ENCODE measurements at regions of chr20 and their contacts with region 1.

Region 1: DNA sequence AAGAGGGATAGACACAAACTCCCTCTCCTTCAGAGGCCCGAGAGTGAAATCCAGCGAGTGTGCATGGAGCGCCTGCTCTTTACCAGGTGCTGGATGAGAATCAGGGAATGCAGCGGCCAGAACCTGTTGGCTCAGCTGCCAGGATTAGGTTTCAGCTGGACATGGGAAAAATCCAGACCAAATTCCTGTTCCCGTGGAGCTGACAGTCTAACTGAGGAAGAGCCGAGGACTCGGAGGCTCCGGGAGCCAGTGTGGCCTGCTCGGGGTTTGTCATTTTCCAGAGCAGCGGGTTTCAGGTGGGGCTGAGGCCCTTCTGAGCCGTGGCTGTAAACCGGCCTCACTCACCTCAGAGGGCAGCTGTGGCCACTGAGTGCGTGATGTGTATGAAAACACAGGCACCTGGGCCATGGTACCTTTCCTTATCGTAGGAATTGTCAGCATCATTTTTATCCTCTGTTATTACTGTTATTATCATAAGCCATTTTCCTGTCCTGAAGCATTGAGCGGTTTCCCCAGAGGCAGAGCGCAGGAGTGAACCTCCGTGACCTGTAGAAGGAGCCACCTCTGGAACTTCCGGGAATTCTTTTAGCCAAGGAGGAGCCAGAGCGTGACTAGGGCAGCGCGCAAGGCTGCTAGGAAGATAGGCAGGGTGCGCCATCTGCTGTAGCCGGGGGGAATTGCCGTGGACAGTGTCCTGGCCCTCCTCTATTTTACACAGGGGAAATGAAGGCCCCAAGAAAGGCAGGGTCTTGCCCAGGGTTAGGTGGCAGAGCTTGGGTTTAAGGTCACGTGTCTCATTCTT is 27.3 kb downstream of the PKIG start:
- DNase-seq: peak; percentile 92
- H3K4me3 Mint-ChIP-seq: peak overlapping the region; percentile 58
- H3K27ac Mint-ChIP-seq: peak overlapping the region; percentile 76
- H3K4me1 Mint-ChIP-seq: peaks cover 10% of the 10 kb centered on the region
- H3K27me3 Mint-ChIP-seq: no peaks in the 10 kb centered on the region
- CTCF ChIP-seq: peak; percentile 96

Region 2: DNA sequence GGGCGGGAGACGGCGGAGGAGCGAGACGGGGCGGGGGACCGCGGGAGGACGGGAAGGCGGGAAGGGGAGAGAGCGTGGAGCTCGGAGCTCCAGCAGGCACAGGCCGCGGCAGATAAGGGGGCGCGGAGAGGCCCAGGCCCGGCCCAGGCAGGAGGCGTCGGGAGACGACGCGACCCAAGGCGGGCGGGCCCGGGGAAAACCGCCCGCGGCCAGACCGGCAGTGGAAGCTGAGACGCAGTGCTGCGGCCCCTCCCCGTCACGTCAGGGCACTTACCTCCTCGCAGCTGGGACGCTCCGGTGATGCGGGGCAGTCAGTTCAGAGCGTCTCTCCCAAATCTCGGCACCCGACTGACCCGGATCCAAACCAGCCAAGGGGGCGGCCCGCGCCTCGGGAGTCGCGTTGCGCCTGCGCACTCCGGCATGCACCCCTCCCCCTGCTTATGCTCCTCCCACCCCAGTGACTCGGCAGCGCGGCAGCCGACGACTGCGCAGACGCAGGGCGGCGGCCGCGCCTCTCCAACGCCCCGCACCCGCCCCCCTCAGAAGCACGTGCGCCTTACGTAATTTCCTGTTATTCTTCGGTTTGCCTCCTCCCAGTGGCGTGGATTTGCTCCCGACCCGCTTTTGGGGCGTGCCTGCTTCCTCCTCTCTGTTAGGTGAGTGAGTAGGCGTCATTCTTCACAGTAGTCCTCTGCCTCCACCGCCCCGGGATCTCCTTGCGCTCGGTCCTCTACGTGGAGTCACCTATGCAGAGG is 399.1 kb before region 1 on chr20 and contains the start of gene OSER1:
- CTCF ChIA-PET with region 1: interaction called, 12 read pairs
- POLR2A ChIA-PET with region 1: interaction called, 4 read pairs
- intact Hi-C with region 1: loop called (anchors 10 kb)
- DNase-seq: peak; percentile 99
- H3K4me3 Mint-ChIP-seq: peak within 1 kb of the TSS; percentile 100
- H3K27ac Mint-ChIP-seq: peak within 1 kb of the TSS; percentile 100
- H3K4me1 Mint-ChIP-seq: peaks cover 39% of the 10 kb centered on the region
- H3K27me3 Mint-ChIP-seq: no peaks in the 10 kb centered on the region
- CTCF ChIP-seq: no peak
- total RNA-seq, gene OSER1: 45.4 and 50.8 TPM in 2 replicates

Region 3: DNA sequence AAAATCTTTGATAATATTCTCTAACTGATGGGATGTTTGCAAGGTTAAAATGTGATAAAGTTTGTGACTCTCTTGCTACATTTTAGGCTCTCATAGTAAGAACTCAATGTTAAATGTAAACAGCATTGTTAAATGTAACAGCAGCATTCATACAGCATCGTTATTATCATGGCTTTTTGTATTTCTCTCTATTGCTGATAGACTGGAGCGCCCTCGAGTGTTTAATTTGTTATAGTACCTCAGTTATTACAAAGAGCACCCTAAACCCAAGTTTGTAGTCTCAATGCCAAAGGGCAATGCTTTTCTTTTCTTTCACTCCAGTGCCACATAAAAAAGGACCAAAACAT is 148.9 kb before region 1 on chr20:
- CTCF ChIA-PET with region 1: interaction called, 16 read pairs
- POLR2A ChIA-PET with region 1: interaction called, 3 read pairs
- intact Hi-C with region 1: no loop called
- DNase-seq: peak; percentile 64
- H3K4me3 Mint-ChIP-seq: no peak overlapping the region
- H3K27ac Mint-ChIP-seq: no peak overlapping the region
- H3K4me1 Mint-ChIP-seq: peaks cover 13% of the 10 kb centered on the region
- H3K27me3 Mint-ChIP-seq: no peaks in the 10 kb centered on the region
- CTCF ChIP-seq: peak; percentile 66

Region 4: DNA sequence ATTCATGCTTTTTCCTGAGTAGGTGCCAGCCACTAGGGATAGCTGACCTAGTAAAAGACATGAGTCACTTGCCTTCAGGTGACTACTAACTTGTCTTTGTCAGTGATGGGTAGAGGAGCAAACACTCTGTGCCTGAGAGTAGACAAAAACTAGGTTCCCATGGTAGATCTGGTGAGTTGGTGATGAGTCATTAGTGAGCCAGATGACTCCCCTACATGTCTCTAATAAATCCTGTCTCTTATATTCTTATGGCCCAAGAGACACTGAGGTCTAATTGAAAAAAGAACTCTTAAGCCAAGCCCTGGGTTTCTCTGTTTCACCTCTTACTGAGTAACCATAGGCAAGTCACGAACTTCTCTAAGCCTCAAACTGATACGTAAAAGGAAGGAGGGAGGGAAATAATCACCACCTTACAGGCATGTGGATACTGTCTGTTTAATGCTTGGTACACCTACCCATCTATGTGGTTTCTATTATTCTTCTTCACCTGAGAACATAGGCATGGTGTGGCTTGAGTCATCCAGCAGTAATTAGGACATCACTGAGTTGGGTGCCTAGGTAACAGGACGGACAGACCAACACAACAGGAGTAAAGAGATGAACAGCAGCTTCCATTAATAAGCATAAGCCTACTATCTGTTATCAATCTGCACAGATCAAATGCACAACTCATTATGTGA is 113.8 kb before region 1 on chr20:
- CTCF ChIA-PET with region 1: interaction called, 19 read pairs
- POLR2A ChIA-PET with region 1: interaction called, 31 read pairs
- intact Hi-C with region 1: no loop called
- DNase-seq: peak; percentile 95
- H3K4me3 Mint-ChIP-seq: peak overlapping the region; percentile 26
- H3K27ac Mint-ChIP-seq: peak overlapping the region; percentile 84
- H3K4me1 Mint-ChIP-seq: peaks cover 47% of the 10 kb centered on the region
- H3K27me3 Mint-ChIP-seq: no peaks in the 10 kb centered on the region
- CTCF ChIP-seq: no peak

Region 5: GRCh38 chr20:44532259-44532980 is 77.3 kb before region 1 on chr20:
- CTCF ChIA-PET with region 1: interaction called, 80 read pairs
- POLR2A ChIA-PET with region 1: interaction called, 30 read pairs
- intact Hi-C with region 1: loop called (anchors 2 kb)
- DNase-seq: peak; percentile 5
- H3K4me3 Mint-ChIP-seq: no peak overlapping the region
- H3K27ac Mint-ChIP-seq: no peak overlapping the region
- H3K4me1 Mint-ChIP-seq: peaks cover 10% of the 10 kb centered on the region
- H3K27me3 Mint-ChIP-seq: no peaks in the 10 kb centered on the region
- CTCF ChIP-seq: no peak

Region 6: DNA sequence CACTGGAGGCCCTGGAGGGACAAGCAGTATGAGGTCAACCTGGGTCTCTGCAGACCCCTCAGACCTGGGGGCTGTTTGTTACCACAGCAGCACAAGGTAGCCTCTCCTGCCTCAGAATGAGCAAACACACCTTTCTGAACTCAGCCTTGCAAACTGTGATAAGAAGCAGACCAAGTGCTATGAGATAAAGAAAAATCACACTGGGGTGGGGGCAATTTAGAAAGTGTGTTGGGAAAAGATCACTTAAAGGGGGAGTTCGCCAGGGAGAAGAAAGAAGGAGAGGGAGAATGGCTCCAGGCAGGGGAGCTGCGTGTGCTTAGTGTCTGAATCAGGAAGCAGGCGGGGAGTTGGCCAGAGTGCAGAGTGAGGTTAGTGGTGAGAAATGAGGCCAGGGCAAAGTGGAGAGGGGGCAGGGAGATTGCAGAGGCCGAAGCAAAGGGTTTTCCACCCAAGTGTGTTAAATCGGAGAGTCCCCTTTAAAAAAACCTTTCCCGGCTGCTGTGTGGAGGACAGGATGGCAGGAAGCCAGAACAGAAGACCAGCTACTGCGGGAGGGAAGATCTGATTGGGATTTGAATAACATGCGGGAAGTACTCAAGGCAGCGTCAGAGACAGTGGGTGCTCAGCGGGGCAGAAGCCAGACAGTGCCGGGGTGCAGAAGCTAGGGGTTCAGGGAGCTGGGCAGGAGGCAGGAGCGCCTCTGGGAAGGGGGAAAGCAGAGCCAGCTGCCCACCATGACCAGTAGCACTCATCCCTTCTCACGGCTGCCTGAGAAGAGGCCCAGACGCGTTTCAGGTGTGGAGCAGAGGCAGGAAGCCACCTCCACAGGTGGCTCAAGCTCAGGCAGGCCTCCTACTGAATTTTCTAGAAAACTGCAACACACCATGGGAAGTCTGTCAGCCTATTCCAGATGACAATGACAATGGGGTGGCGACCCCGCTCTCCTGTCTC is 32.8 kb after region 1 on chr20:
- CTCF ChIA-PET with region 1: interaction called, 8 read pairs
- POLR2A ChIA-PET with region 1: interaction called, 16 read pairs
- intact Hi-C with region 1: no loop called
- DNase-seq: peak; percentile 89
- H3K4me3 Mint-ChIP-seq: peak overlapping the region; percentile 3
- H3K27ac Mint-ChIP-seq: peak overlapping the region; percentile 89
- H3K4me1 Mint-ChIP-seq: peaks cover 33% of the 10 kb centered on the region
- H3K27me3 Mint-ChIP-seq: no peaks in the 10 kb centered on the region
- CTCF ChIP-seq: no peak

Region 7: GRCh38 chr20:44780226-44780625 is 170.5 kb after region 1 on chr20:
- CTCF ChIA-PET with region 1: no interaction called
- POLR2A ChIA-PET with region 1: no interaction called
- intact Hi-C with region 1: no loop called
- DNase-seq: peak; percentile 60
- H3K4me3 Mint-ChIP-seq: no peak overlapping the region
- H3K27ac Mint-ChIP-seq: no peak overlapping the region
- H3K4me1 Mint-ChIP-seq: no peaks in the 10 kb centered on the region
- H3K27me3 Mint-ChIP-seq: peaks cover 22% of the 10 kb centered on the region
- CTCF ChIP-seq: no peak

Region 8: GRCh38 chr20:44819936-44820335 is 210.2 kb after region 1 on chr20:
- CTCF ChIA-PET with region 1: no interaction called
- POLR2A ChIA-PET with region 1: no interaction called
- intact Hi-C with region 1: no loop called
- DNase-seq: no peak
- H3K4me3 Mint-ChIP-seq: no peak overlapping the region
- H3K27ac Mint-ChIP-seq: no peak overlapping the region
- H3K4me1 Mint-ChIP-seq: no peaks in the 10 kb centered on the region
- H3K27me3 Mint-ChIP-seq: peaks cover 35% of the 10 kb centered on the region
- CTCF ChIP-seq: no peak